Heart left ventricle (tissue), 16 donors: ENCODE measurements at regions of chr20 and their contacts with region 1.

Region 1: DNA sequence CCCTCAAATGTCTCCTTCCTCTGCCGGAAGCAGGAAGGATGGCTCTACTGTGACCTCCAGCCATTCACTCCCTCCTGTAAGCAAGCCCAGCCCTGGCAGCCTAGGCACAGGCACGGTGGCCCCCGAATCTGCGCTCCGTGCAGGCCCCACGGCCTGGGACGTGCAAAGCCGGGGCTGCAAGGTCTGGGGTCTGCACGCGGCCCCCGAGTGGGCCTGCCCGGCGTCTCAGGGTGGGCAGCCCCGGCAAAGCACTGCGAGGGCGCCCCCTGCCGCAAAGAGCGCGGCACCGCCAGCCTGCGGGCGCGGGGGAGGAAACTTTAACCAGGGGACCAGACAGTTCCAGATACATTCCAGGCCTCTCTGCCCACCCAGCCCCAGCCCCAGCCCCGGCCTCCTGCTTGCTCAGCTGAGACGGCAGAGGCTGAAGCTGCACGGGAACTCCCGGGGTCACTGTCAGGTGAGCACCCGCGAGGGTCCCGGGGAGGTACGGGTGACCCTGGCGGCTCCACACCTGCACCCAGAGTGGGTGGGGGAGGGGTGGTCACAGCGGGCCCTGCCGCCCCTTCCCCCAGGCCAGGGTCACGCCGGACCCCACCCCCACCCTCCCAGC is 98.8 kb downstream of the ASXL1 start:
- DNase-seq: peak in 2 of 5 donors; percentile 55 to 69
- ATAC-seq: peak; percentile 45 to 74 (median 56)
- H3K4me3 ChIP-seq: peak overlapping the region; percentile 19 to 72 (median 55)
- H3K27ac ChIP-seq: peak overlapping the region in 4 of 12 donors; percentile 24 to 64 (median 42)
- H3K4me1 ChIP-seq: peaks cover 0 to 22% (median 16%) of the 10 kb centered on the region in 12 donors
- H3K27me3 ChIP-seq: no peaks in the 10 kb centered on the region
- CTCF ChIP-seq: peak; percentile 65 to 88 (median 82)
- POLR2A ChIP-seq: no peak

Region 2: DNA sequence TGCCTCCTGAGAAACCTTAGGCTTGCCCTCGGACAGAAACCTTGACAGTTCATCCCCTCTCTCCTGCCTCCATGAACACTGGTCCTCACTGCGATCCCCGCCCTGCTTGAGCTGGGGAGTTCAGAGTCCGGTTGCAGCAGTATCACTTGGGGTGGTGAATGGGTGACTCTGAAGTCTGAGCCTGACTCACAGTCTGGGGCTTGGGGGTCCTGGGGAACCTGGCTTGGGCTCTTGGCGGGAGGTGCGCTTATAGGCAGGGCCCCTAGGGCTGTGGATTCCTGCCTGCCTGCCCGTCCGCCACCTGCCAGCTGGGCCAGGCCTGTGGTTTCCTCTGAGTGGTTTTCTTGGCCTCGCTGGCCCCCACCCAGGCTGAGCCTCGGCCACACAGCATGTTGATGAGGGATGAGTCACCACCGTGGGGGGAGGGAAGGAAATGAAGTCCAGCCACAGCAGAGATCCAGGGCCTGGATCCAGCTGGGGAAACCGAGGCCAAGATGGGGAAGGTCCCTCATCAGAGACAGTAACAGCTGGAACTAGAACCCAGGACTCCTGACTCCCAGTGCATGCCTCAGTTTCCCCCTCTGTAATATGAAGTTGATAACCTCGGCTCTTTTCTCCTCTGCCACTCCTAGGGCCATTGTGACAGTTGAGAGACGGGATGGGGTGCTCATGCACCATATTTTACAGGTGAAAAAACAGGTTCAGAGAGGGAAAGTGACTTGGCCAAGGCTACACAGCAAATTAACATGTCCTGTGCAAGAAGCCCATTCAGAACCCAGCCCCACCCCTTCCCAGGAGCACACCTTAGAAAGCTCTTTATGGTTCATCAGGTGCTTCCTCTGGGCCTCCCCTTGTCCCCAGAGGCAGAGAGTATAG is 620.8 kb before region 1 on chr20:
- intact Hi-C with region 1: loop called in 1 of 10 experiments (anchors 10 kb)
- DNase-seq: peak; percentile 84 to 92 (median 89)
- ATAC-seq: peak; percentile 66 to 86 (median 85)
- H3K4me3 ChIP-seq: no peak overlapping the region
- H3K27ac ChIP-seq: peak overlapping the region in 9 of 12 donors; percentile 6 to 89 (median 65)
- H3K4me1 ChIP-seq: peaks cover 0 to 73% (median 32%) of the 10 kb centered on the region in 12 donors
- H3K27me3 ChIP-seq: no peaks in the 10 kb centered on the region
- CTCF ChIP-seq: no peak
- POLR2A ChIP-seq: no peak